Activated B cell treated with CpG ODN at 0.5 μM for 24 hours (primary cell): ENCODE measurements at regions of chr5 and their contacts with region 1.

Region 1: GRCh38 chr5:66553916-66554575 is 42.1 kb upstream of the MAST4 start:
- DNase-seq: peak; percentile 40
- ATAC-seq: peak; percentile 93
- H3K4me3 Mint-ChIP-seq: peak overlapping the region; percentile 63
- H3K27ac Mint-ChIP-seq: peak overlapping the region; percentile 91
- H3K4me1 Mint-ChIP-seq: peaks cover 42% of the 10 kb centered on the region
- H3K27me3 Mint-ChIP-seq: no peaks in the 10 kb centered on the region
- CTCF ChIP-seq: no peak

Region 2: DNA sequence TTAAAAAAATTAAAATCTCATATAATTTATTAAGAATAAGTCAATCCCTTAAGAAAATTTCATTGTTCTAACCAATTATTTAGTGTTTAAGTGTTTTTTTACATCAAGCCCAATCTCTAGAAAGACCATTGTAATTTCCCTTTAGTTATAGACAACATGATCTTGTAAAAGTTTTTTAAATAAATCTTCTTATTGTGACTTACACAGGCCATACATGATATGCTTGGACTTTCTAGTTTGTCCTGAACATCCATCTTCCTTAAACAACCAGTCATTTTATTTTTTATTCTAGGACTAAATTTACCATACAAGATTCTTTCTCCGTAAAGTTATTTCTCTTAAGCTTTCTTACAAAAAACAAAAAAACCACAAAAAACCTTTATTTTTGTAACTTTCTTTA is 84.4 kb before region 1 on chr5:
- CTCF ChIA-PET with region 1: no interaction called
- POLR2A ChIA-PET with region 1: interaction called, 3 read pairs
- intact Hi-C with region 1: loop called (anchors 5 kb)
- DNase-seq: no peak
- ATAC-seq: no peak
- H3K4me3 Mint-ChIP-seq: no peak overlapping the region
- H3K27ac Mint-ChIP-seq: no peak overlapping the region
- H3K4me1 Mint-ChIP-seq: peaks cover 15% of the 10 kb centered on the region
- H3K27me3 Mint-ChIP-seq: no peaks in the 10 kb centered on the region
- CTCF ChIP-seq: no peak

Region 3: DNA sequence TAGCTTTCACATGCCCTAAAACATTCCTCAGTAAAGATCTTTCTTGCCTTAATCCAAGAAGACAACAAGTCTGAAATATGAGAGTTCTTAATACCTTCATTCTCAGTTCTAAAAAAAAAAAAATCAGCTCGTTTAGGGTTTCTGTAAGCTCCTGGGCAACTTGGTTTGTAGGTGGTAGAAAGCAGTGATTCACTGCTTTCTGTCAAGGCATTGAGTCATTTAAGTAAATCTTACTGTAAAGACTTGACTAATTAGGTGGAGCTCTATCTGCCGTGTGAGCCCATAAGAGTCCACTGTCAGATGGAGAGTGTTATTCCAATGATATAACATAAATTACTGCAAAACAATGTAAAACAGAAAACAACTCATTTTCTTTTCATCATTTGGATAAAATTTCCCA is 14.0 kb before region 1 on chr5:
- CTCF ChIA-PET with region 1: no interaction called
- POLR2A ChIA-PET with region 1: interaction called, 3 read pairs
- intact Hi-C with region 1: loop called (anchors 1 kb)
- DNase-seq: no peak
- ATAC-seq: peak; percentile 40
- H3K4me3 Mint-ChIP-seq: no peak overlapping the region
- H3K27ac Mint-ChIP-seq: no peak overlapping the region
- H3K4me1 Mint-ChIP-seq: peaks cover 22% of the 10 kb centered on the region
- H3K27me3 Mint-ChIP-seq: no peaks in the 10 kb centered on the region
- CTCF ChIP-seq: no peak

Region 4: DNA sequence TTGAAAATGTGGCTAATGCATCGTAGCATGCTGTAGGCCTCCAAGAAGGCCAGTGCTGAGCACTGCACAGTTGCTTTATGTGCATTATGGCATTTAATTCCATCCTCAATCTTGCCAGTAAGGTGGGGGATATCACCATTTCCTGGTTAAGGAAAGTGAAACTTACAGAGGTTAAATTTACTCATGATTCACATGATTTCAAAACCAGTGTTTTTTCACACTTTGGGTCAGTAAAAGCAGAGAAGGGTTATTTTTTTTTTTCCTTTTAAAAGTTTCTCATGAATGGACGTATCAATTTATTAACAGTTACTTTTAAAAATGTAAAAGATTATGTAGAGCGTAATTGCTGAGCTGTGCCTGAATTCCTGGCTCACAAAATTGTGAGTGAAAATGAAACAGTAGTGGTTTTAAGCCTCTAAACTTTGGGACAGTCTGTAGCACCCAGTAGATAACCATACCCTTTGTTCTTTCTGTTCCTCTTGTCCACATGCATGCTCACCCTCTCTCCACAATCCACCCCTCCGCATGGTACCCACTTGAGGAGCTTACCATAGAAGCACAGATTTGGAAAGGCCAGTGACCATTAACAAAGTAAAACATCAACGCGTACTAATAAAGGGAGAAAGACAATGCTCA is 63.3 kb after region 1 on chr5:
- CTCF ChIA-PET with region 1: no interaction called
- POLR2A ChIA-PET with region 1: interaction called, 3 read pairs
- intact Hi-C with region 1: loop called (anchors 2 kb)
- DNase-seq: no peak
- ATAC-seq: peak; percentile 58
- H3K4me3 Mint-ChIP-seq: peak overlapping the region; percentile 63
- H3K27ac Mint-ChIP-seq: peak overlapping the region; percentile 79
- H3K4me1 Mint-ChIP-seq: peaks cover 47% of the 10 kb centered on the region
- H3K27me3 Mint-ChIP-seq: no peaks in the 10 kb centered on the region
- CTCF ChIP-seq: no peak

Region 5: GRCh38 chr5:67196537-67197059 is 642.6 kb after region 1 on chr5 and contains the start of gene CD180:
- CTCF ChIA-PET with region 1: no interaction called
- POLR2A ChIA-PET with region 1: no interaction called
- intact Hi-C with region 1: loop called (anchors 5 kb)
- DNase-seq: no peak
- ATAC-seq: peak; percentile 32
- H3K4me3 Mint-ChIP-seq: peak within 1 kb of the TSS; percentile 91
- H3K27ac Mint-ChIP-seq: peak within 1 kb of the TSS; percentile 98
- H3K4me1 Mint-ChIP-seq: peaks cover 97% of the 10 kb centered on the region
- H3K27me3 Mint-ChIP-seq: no peaks in the 10 kb centered on the region
- CTCF ChIP-seq: no peak
- total RNA-seq, gene CD180: 32.6 and 35.7 TPM in 2 replicates